ENCODE measurements at regions of chr11 and their contacts with region 1.

Region 1: DNA sequence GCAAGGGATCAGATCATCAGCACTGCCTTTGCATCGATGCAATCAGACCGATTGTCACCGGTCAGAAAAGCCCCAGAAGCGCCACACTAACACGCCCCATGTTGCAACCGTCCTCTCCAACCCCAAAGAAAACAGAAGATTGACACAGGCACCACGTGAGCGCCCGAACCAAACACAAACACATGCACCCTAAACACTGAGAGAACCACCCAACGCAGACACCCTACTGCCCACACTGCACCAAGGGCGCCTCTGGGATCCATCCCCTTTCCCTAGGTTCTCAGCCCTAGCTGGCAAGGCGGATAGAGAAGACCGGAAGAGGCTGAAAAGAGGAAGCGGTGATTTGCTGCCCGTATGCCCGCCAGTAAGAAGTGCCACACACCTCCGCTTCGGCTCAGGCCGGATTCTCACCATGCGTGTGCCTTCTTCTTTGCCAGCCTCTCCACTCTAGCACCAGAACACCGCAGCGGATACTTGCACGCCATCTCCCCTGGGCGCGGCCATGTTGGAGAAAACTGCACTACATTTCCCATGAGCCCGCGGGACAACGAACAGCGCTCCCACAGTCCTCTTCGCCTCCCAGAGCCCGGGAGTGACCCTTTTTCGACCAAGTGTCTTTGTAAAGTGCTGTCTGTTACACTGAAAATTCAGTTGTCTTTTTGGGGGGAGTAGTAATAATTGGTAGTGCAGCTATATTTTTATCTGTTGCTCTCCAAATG is at the start of gene ALKBH8:
- DNase-seq: peak; percentile 84
- ATAC-seq: peak; percentile 71
- H3K4me3 ChIP-seq: peak within 1 kb of the TSS; percentile 73
- H3K27ac ChIP-seq: peak within 1 kb of the TSS; percentile 64
- H3K4me1 ChIP-seq: peaks cover 48% of the 10 kb centered on the region
- H3K27me3 ChIP-seq: no peaks in the 10 kb centered on the region
- CTCF ChIP-seq: no peak
- total RNA-seq, gene ALKBH8: 7.0 and 14.3 TPM in 2 replicates

Region 2: DNA sequence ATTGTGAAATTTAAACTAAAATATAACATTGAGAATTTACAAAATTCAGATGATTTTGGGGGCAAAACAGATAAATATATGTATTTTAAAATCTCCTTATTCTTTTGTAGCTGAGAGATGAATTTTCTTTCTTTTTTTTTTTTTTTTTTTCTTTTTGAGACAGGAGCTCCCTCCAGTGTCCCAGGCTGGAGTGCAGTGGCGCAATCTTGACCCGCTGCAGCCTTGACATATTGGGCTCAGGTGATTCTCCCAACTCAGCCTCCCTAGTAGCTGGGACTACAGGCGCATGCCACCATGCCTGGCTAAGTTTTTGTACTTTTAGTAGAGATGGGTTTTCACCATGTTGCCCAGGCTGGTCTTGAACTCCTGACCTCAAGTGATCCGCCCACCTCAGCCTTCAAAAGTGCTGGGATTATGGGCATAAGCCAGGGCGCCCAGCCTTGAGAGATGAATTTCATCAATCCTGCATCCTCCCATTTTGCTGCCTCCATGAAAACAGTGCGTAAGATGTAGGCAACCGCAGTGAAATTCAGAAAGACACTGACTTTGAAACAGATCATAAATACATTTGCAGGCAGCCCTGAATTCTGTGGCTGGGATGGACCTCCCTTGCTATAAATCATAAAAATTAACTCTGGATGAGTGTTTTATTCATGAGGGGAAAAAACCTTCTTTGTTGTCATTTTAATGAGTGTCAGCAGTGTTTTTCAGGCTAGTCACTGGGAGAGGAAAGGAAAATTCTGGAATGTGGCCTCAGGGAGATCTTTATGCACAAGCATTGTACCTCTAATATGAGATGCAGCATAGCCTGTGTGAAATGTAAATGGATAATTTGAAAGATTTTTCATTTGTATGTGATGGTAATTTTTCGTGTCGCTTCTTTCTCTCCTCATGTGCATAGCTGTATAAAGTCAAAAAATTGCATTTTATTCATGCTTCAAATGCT is 40.0 kb after region 1 on chr11:
- CTCF ChIA-PET with region 1: interaction called, 6 read pairs
- POLR2A ChIA-PET with region 1: no interaction called
- intact Hi-C with region 1: loop called (anchors 2 kb)
- DNase-seq: peak; percentile 39
- ATAC-seq: peak; percentile 35; the same call in 1 of the 2 replicates
- H3K4me3 ChIP-seq: no peak overlapping the region
- H3K27ac ChIP-seq: no peak overlapping the region
- H3K4me1 ChIP-seq: no peaks in the 10 kb centered on the region
- H3K27me3 ChIP-seq: peaks cover 88% of the 10 kb centered on the region
- CTCF ChIP-seq: peak; percentile 55; the same call in 1 of the 2 replicates

Region 3: DNA sequence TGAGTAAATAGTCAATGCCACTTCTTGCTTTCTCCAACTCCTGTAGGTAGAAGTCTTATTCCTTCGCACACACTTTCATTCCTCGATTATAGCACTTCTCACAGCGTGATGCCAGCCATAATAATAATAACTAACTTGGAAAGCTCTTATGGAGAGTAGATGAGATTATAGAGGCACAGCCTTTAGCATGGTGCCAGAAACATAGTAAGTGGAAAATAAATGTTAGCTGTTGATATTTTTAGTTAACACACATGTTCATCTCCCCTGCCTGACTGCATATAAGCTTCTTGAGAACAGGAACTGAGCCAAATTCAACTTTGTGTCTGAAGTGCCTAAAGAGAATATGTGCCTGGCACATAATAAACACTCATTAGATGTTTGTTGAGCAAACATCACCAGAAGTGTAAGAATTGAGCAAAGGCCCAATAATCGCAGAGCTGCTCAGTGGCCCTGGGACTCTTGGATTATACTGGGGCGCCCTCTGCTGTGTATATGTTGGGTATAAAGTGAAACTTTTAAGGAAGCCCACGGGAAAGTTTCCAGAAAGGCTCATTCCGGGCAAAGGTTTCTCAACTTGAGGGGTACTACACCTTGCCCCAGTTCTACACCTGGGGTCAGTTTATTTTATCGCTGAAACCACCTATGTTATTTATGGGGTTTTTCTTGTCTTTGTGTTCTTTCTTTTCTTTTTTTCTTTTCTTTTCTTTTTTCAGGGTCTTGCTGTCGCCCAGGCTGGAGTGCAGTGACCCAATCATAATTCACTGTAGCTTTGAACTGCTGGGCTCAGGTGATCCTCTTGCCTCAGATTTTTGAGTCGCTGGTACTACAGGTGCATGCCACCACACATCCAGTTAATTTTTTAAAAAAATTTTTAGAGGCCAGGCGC is 124.2 kb after region 1 on chr11:
- CTCF ChIA-PET with region 1: interaction called, 10 read pairs
- POLR2A ChIA-PET with region 1: no interaction called
- intact Hi-C with region 1: loop called (anchors 1 kb)
- DNase-seq: peak; percentile 94
- ATAC-seq: peak; percentile 86
- H3K4me3 ChIP-seq: peak overlapping the region; percentile 45; the same call in 1 of the 2 replicates
- H3K27ac ChIP-seq: no peak overlapping the region
- H3K4me1 ChIP-seq: peaks cover 19% of the 10 kb centered on the region
- H3K27me3 ChIP-seq: 0 out of 2 replicates have a peak, but pooled peaks cover 6% of the 10 kb centered on the region
- CTCF ChIP-seq: peak; percentile 98

Region 4: GRCh38 chr11:107770551-107770951 is 205.2 kb after region 1 on chr11:
- CTCF ChIA-PET with region 1: interaction called, 7 read pairs
- POLR2A ChIA-PET with region 1: no interaction called
- intact Hi-C with region 1: loop called (anchors 1 kb)
- DNase-seq: peak; percentile 51
- ATAC-seq: peak; percentile 9; the same call in 1 of the 2 replicates
- H3K4me3 ChIP-seq: no peak overlapping the region
- H3K27ac ChIP-seq: no peak overlapping the region
- H3K4me1 ChIP-seq: peaks cover 15% of the 10 kb centered on the region
- H3K27me3 ChIP-seq: peaks cover 6% of the 10 kb centered on the region
- CTCF ChIP-seq: no peak

Region 5: GRCh38 chr11:107928046-107928766 is 362.8 kb after region 1 on chr11 and contains the start of gene RAB39A:
- CTCF ChIA-PET with region 1: interaction called, 12 read pairs
- POLR2A ChIA-PET with region 1: no interaction called
- intact Hi-C with region 1: no loop called
- DNase-seq: peak; percentile 92
- ATAC-seq: peak; percentile 81
- H3K4me3 ChIP-seq: peak within 1 kb of the TSS; percentile 1; the same call in 1 of the 2 replicates
- H3K27ac ChIP-seq: no peak within 1 kb of the TSS
- H3K4me1 ChIP-seq: peaks cover 17% of the 10 kb centered on the region
- H3K27me3 ChIP-seq: peaks cover 29% of the 10 kb centered on the region
- CTCF ChIP-seq: no peak
- total RNA-seq, gene RAB39A: not detected in 2 replicates